AG04450 (cell line): ENCODE measurements at regions of chr10 and their contacts with region 1.

Region 1: GRCh38 chr10:95430231-95430951 is 130.8 kb downstream of the SORBS1 start:
- DNase-seq: peak; percentile 15
- H3K4me3 ChIP-seq: no peak overlapping the region
- H3K27ac ChIP-seq: peak overlapping the region; percentile 11
- H3K27me3 ChIP-seq: peaks cover 11% of the 10 kb centered on the region
- CTCF ChIP-seq: peak; percentile 95

Region 2: DNA sequence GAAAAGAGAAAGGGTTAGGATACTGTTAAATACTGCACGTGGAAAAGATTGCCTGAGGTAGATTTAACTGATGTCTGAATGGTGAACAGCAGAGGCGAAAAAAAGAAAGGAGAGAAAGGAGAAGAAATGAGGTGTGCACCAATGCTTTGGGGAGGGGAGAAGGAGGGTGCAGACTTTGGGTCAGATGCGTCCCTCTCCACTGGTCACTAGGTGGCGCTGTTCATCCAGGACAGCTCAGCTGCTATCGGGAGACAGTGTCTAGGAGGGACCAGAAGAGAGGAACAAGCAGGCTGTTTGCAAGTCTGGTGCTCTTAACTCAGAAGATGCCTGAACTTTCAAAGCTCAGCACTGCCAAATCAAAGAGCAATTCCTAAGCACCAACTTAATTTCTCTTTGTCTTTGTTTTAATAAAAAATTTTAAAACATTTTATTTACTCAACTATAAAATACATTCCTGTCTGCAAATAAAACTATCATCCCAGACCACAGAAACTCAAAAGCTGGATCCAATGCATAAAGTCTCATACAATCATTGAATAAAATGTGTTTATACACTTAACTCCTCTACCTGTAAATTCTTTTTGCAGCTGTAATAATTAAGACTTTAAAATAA is 55.7 kb before region 1 on chr10:
- CTCF ChIA-PET with region 1: interaction called, 22 read pairs
- POLR2A ChIA-PET with region 1: no interaction called
- DNase-seq: peak; percentile 10
- H3K4me3 ChIP-seq: no peak overlapping the region
- H3K27ac ChIP-seq: no peak overlapping the region
- H3K27me3 ChIP-seq: peaks cover 21% of the 10 kb centered on the region
- CTCF ChIP-seq: peak; percentile 70

Region 3: GRCh38 chr10:95419399-95419798 is 11.0 kb before region 1 on chr10:
- CTCF ChIA-PET with region 1: interaction called, 34 read pairs
- POLR2A ChIA-PET with region 1: no interaction called
- DNase-seq: no peak
- H3K4me3 ChIP-seq: no peak overlapping the region
- H3K27ac ChIP-seq: no peak overlapping the region
- H3K27me3 ChIP-seq: peaks cover 2% of the 10 kb centered on the region
- CTCF ChIP-seq: no peak

Region 4: GRCh38 chr10:95451568-95452524 is 21.5 kb after region 1 on chr10:
- CTCF ChIA-PET with region 1: interaction called, 118 read pairs
- POLR2A ChIA-PET with region 1: no interaction called
- DNase-seq: no peak
- H3K4me3 ChIP-seq: no peak overlapping the region
- H3K27ac ChIP-seq: no peak overlapping the region
- H3K27me3 ChIP-seq: peaks cover 6% of the 10 kb centered on the region
- CTCF ChIP-seq: no peak

Region 5: GRCh38 chr10:95601116-95601719 is 170.8 kb after region 1 on chr10:
- CTCF ChIA-PET with region 1: interaction called, 166 read pairs
- POLR2A ChIA-PET with region 1: no interaction called
- DNase-seq: peak; percentile 70
- H3K4me3 ChIP-seq: no peak overlapping the region
- H3K27ac ChIP-seq: no peak overlapping the region
- H3K27me3 ChIP-seq: no peaks in the 10 kb centered on the region
- CTCF ChIP-seq: peak; percentile 98

Region 6: GRCh38 chr10:95660283-95660682 is 229.9 kb after region 1 on chr10:
- CTCF ChIA-PET with region 1: no interaction called
- POLR2A ChIA-PET with region 1: no interaction called
- DNase-seq: no peak
- H3K4me3 ChIP-seq: no peak overlapping the region
- H3K27ac ChIP-seq: no peak overlapping the region
- H3K27me3 ChIP-seq: no peaks in the 10 kb centered on the region
- CTCF ChIP-seq: no peak